ENCODE measurements at regions of chr6 and their contacts with region 1.

Region 1: DNA sequence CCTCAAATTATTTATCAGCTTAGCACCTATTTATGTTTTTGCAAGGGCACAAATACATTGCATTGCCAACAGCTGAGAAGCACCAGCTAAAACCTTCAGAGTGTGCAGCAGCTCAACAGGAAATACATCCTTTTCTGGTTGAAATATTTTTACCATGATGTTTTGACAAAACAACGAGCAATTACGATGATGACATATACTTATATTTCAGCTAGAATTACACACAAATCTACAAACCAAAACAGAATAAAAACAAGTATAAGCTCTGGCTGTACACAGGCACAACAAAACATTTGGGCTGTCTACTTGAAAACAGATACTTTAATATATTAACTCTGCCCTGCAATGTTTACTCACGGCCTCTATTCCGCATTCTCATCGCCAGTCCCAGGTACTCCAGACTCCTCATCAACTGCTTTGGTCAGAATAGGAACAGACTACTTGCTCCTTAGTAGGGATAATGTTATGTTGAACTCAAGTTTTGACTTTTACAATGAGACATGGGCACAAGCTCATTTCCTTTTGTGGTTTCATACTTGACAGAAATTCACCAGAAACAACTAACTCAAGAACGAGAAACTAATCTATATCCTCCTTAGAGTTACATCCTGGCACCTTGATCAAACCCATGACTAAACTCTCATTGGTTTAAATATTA is 377.6 kb downstream of the ESR1 start:
- DNase-seq: peak in 6 of 10 donors; percentile 9 to 71 (median 38)
- ATAC-seq: peak; percentile 71 to 79
- H3K4me3 Mint-ChIP-seq: peak overlapping the region; percentile 92 to 99 (median 97)
- H3K27ac Mint-ChIP-seq: peak overlapping the region; percentile 93 to 100 (median 98)
- H3K4me1 Mint-ChIP-seq: peaks cover 24 to 87% (median 83%) of the 10 kb centered on the region in 4 donors
- H3K27me3 Mint-ChIP-seq: no peaks in the 10 kb centered on the region

Region 2: GRCh38 chr6:151847066-151847465 is 338.0 kb before region 1 on chr6:
- POLR2A ChIA-PET with region 1: no interaction called
- DNase-seq: no peak
- ATAC-seq: no peak
- H3K4me3 Mint-ChIP-seq: no peak overlapping the region
- H3K27ac Mint-ChIP-seq: no peak overlapping the region
- H3K4me1 Mint-ChIP-seq: no peaks in the 10 kb centered on the region
- H3K27me3 Mint-ChIP-seq: peaks cover 0 to 8% (median 1%) of the 10 kb centered on the region in 5 donors

Region 3: GRCh38 chr6:152136453-152136825 is 48.6 kb before region 1 on chr6:
- POLR2A ChIA-PET with region 1: no interaction called
- DNase-seq: no peak
- ATAC-seq: no peak
- H3K4me3 Mint-ChIP-seq: no peak overlapping the region
- H3K27ac Mint-ChIP-seq: peak overlapping the region in 4 of 10 donors; percentile 9 to 82 (median 58)
- H3K4me1 Mint-ChIP-seq: peaks cover 0 to 3% (median under 1%) of the 10 kb centered on the region in 4 donors
- H3K27me3 Mint-ChIP-seq: no peaks in the 10 kb centered on the region

Region 4: DNA sequence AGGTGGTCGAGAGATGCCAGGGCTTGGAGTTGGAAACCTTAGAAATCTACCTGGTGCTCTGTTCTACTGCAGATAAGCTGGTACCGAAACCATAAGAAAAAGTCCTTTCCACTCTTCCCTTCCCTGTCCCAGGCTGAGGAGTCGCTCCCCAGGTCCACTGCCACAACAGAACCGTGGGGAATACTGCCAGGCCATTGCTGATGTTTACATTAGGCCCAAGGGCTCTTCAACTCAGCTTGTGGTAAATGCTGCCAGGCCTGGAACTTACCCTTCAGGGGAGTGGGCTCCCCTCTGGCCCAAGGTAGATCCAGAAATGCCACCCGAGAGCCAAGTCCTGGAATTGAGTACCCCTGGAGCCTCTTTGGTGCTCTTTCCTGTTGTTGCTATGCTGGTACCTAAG is 10.8 kb after region 1 on chr6:
- POLR2A ChIA-PET with region 1: interaction called, 15 read pairs
- DNase-seq: no peak
- ATAC-seq: no peak
- H3K4me3 Mint-ChIP-seq: no peak overlapping the region
- H3K27ac Mint-ChIP-seq: peak overlapping the region in 5 of 10 donors; percentile 30 to 65 (median 43)
- H3K4me1 Mint-ChIP-seq: peaks cover 5 to 11% (median 8%) of the 10 kb centered on the region in 4 donors
- H3K27me3 Mint-ChIP-seq: no peaks in the 10 kb centered on the region

Region 5: GRCh38 chr6:152204591-152204990 is 19.5 kb after region 1 on chr6:
- POLR2A ChIA-PET with region 1: interaction called, 11 read pairs
- DNase-seq: no peak
- ATAC-seq: no peak
- H3K4me3 Mint-ChIP-seq: no peak overlapping the region
- H3K27ac Mint-ChIP-seq: no peak overlapping the region
- H3K4me1 Mint-ChIP-seq: peaks cover 4 to 13% (median 5%) of the 10 kb centered on the region in 4 donors
- H3K27me3 Mint-ChIP-seq: no peaks in the 10 kb centered on the region

Region 6: DNA sequence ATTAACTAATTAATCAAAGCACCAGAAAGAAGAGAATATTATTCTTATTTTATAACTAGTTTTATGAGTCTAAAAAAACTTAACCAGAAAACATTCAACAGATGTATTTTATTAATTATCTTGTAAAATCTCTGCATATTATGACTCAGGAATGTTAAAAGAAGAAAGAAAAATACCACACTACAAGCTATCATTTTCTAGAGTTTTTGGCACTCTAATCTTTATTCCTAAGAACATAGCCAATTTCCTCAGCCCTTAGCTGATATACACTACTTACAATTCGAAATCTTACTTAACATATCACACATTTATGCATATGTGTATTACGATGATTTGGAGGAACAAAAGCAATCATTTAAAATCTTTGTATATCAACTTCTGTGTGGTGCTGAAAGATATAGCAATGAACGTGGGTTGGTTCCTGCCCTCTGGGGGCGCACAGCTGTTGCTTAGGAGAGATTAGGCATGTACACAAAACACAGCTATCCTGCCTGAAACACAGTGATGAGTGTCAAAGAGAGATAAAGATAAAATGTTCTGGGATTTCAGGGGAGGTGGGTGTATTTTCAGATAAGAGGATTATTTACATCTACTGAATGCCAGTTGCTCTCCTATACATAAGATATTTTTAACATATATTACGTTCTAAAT is 47.6 kb after region 1 on chr6:
- POLR2A ChIA-PET with region 1: interaction called, 36 read pairs
- DNase-seq: peak in 1 of 10 donors; percentile 12
- ATAC-seq: peak; percentile 41 to 55
- H3K4me3 Mint-ChIP-seq: peak overlapping the region in 9 of 10 donors; percentile 47 to 82 (median 79)
- H3K27ac Mint-ChIP-seq: peak overlapping the region in 9 of 10 donors; percentile 61 to 94 (median 86)
- H3K4me1 Mint-ChIP-seq: peaks cover 5 to 28% (median 24%) of the 10 kb centered on the region in 4 donors
- H3K27me3 Mint-ChIP-seq: no peaks in the 10 kb centered on the region

Region 7: DNA sequence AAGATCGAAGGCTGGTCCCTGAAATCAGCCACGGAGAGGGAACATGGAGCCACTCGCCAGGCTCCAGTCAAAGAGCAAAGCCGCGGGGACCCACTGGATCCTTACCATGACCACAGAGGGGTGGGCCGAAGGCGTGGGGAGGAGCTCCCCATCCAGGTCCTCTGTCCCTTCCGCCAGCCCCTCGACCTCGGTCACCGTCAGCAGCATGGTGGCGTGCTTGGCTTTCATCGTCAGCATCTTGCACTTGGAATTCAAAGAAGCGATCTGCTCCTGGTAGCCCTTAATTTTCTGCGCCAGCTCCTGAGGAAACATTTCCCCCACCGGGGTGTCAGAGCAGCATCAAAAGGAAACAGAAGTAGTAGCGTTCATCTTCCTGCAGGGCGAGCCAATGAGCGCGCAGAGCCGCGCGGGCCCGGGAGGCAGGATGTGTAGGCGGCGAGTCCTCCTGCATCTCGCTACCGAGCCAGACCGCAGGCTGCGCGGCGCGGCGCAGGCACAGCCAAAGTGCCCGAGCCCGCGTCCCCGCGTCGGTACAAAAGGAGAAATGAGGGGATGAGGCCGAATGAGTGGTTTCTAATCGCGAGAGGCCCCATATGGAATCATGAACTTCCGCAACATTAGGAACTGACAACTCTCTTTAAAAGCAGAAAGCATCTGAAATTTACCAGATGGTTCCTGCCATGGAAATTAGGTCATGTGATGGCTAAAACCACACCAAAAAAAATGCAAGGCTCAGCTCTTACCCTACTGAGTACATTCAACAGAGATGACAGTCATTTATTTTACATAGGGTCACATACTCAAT is 116.9 kb after region 1 on chr6:
- POLR2A ChIA-PET with region 1: interaction called, 21 read pairs
- DNase-seq: peak; percentile 78 to 92 (median 86)
- ATAC-seq: peak; percentile 96
- H3K4me3 Mint-ChIP-seq: peak overlapping the region; percentile 98 to 100 (median 100)
- H3K27ac Mint-ChIP-seq: peak overlapping the region; percentile 97 to 100 (median 98)
- H3K4me1 Mint-ChIP-seq: peaks cover 18 to 43% (median 40%) of the 10 kb centered on the region in 4 donors
- H3K27me3 Mint-ChIP-seq: no peaks in the 10 kb centered on the region